ENCODE measurements at regions of chr1 and their contacts with region 1.

Region 1: GRCh38 chr1:159936273-159936904 is 9.0 kb downstream of the IGSF9 start:
- DNase-seq: peak; percentile 73
- H3K4me3 Mint-ChIP-seq: no peak overlapping the region
- H3K27ac Mint-ChIP-seq: no peak overlapping the region
- H3K4me1 Mint-ChIP-seq: peaks cover 16% of the 10 kb centered on the region
- H3K27me3 Mint-ChIP-seq: peaks cover 16% of the 10 kb centered on the region

Region 2: DNA sequence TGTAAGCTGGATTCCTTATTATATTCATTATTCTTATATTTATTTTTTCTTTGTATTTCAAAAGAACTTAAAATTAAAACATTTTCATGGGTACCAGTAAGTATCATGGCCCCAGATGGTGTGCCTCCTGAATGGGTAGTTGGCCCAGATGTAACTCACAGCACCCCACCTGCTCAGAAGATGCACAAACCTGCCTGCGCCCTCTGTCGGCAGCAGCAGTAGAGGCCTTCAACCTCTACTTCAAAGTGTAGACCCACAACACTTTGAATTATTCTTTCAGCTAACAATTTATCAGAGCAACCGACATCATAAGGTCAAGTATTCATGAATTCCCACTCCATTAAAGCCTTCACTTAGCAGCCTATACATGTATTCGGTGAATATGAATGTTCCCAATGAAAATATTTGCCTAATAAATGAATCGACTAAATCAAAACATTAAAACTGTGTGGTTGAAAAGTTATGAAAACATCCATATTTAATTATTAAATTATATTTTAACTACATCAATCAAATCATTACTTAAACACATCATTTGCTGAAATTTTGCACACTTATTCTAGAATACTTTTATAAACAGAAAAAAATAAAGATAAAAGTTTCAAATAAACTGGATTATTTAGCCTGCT is 70.0 kb after region 1 on chr1:
- intact Hi-C with region 1: loop called (anchors 1 kb)
- DNase-seq: peak; percentile 63
- H3K4me3 Mint-ChIP-seq: no peak overlapping the region
- H3K27ac Mint-ChIP-seq: no peak overlapping the region
- H3K4me1 Mint-ChIP-seq: no peaks in the 10 kb centered on the region
- H3K27me3 Mint-ChIP-seq: peaks cover 2% of the 10 kb centered on the region

Region 3: DNA sequence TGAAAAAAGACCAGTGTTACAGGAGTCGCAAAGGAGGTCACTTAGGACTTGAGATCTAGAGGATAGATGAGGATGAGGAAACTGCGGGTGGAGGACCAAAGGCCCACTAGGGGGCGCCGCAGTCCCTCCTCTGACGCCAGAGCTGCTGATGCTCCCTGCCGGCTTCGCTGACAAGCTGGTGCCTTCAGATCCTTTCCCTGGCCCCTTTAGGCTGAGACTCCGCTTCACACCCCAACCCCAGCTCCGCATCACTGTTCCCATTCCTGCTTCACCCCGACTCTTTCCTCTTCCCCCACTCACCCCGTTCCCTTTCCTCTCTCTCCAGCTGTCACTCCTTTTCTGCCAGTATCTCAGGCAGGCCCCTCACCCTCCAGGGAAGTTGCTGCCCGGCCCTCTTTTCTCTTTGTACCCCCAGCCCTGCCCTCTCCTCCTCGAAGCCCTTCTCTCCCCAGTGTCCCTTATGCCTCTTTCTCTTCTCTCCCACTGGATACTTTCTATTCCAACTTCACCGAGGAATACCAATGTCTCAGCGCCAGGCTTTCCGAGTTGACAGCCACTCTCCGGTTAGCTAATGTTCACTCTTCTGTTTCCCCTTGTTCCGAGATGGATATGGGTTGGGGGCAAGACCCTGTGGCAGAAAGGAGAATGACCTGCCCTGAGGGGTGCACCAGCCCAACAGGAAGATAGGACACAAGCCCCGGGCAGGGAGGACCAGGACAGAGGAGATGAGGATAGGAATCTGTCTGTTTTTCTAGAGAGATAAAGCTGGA is 149.5 kb after region 1 on chr1:
- intact Hi-C with region 1: loop called (anchors 2 kb)
- DNase-seq: peak; percentile 66
- H3K4me3 Mint-ChIP-seq: no peak overlapping the region
- H3K27ac Mint-ChIP-seq: no peak overlapping the region
- H3K4me1 Mint-ChIP-seq: peaks cover 6% of the 10 kb centered on the region
- H3K27me3 Mint-ChIP-seq: peaks cover 21% of the 10 kb centered on the region